Calu3 (cell line): ENCODE measurements at regions of chr13 and their contacts with region 1.

Region 1: DNA sequence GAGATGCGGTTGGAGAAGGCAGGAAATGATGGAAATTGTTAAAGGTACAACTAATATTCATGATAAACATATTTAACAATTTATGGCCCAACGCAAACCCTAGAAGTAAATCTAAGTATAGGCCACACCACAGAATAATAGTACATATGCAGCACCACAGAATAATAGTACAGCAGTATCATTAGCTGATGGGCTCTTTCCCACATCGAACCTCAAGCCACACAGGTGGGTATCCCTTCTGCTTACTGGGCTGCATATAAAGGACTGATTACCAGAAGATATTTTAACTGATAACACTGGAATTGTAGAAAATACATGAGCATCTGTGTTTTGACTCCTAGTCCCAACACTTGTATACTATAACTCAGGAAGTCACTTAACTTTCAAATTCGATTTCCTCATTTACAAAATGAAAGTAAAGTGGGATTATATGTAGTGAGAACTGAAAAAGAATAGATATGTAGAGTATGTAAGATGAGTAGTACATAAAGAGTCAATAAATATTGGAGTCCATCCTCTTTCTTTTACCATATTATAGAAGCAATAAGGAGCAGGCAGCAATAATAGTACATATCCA is 91.5 kb downstream of the TSC22D1 start:
- DNase-seq: no peak
- H3K4me3 Mint-ChIP-seq: no peak overlapping the region
- H3K27ac Mint-ChIP-seq: no peak overlapping the region
- H3K4me1 Mint-ChIP-seq: no peaks in the 10 kb centered on the region
- H3K27me3 Mint-ChIP-seq: no peaks in the 10 kb centered on the region
- CTCF ChIP-seq: no peak

Region 2: GRCh38 chr13:44577236-44578066 is 92.8 kb after region 1 on chr13:
- CTCF ChIA-PET with region 1: no interaction called
- intact Hi-C with region 1: loop called (anchors 10 kb)
- DNase-seq: peak; percentile 93
- H3K4me3 Mint-ChIP-seq: peak overlapping the region; percentile 83
- H3K27ac Mint-ChIP-seq: peak overlapping the region; percentile 36
- H3K4me1 Mint-ChIP-seq: peaks cover 21% of the 10 kb centered on the region
- H3K27me3 Mint-ChIP-seq: no peaks in the 10 kb centered on the region
- CTCF ChIP-seq: no peak

Region 3: DNA sequence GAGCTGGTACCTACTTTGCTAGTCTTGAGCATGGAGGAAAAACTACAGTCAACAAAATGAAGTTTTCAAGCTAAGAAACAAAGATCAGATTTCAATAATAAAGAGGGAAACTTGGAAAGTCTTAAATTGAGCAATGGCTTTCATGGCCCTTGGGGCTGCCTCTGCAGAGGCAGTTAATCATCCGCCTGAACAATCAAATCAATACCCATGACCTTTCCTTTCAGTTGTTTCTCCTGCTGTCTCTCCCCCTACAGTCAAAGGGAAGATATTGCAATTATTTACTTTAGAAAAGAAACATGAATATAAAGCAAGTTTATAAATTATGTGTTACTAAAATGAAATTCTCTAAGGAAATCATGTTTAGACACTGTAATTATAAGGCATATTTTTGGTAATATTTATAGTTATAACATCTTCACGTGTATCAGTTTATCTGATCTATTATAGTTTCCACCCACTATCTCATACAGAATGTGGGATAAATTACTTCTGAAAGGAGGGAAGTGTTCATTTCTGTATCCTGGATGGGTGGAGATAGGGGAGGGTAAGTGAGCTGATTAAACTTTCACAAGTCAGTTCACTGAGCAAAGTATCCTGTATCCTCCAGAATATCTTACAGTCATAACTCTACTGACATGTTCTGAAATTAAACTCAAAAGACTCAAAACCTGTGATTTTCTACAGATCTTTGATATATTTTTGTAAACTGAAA is 163.9 kb after region 1 on chr13:
- CTCF ChIA-PET with region 1: no interaction called
- intact Hi-C with region 1: no loop called
- DNase-seq: no peak
- H3K4me3 Mint-ChIP-seq: no peak overlapping the region
- H3K27ac Mint-ChIP-seq: no peak overlapping the region
- H3K4me1 Mint-ChIP-seq: no peaks in the 10 kb centered on the region
- H3K27me3 Mint-ChIP-seq: no peaks in the 10 kb centered on the region
- CTCF ChIP-seq: peak; percentile 23

Region 4: DNA sequence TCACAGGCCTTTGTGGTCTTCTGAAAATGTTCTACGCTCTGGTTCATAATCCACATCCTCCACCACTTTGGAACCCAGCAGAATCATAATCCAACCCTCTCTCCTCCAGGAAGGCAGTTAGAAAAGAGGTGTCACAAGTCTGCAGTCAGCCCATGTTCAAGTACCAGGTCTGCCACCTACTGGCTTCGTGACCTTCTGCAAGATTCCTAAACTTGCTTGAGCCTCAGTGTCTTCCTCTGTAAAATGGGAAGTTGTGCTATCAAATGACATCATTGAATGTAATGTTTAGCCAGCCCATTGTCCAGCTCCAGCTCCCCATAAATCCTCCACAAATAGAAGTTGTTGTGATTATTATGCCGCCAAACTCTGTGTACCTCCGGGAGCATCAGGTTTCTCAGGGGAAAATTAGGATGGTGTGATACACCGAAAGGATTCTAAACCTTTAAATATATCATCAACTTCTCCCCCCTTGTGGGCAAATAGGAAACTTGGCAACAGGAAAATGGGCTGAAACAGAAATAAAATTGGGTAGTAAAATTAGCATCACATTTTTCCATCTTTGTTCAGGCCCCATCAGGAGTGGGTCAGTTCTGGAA is 394.9 kb after region 1 on chr13:
- CTCF ChIA-PET with region 1: interaction called, 5 read pairs
- intact Hi-C with region 1: loop called (anchors 1 kb)
- DNase-seq: peak; percentile 15
- H3K4me3 Mint-ChIP-seq: no peak overlapping the region
- H3K27ac Mint-ChIP-seq: no peak overlapping the region
- H3K4me1 Mint-ChIP-seq: no peaks in the 10 kb centered on the region
- H3K27me3 Mint-ChIP-seq: no peaks in the 10 kb centered on the region
- CTCF ChIP-seq: no peak

Region 5: GRCh38 chr13:44969551-44970484 is 485.2 kb after region 1 on chr13:
- CTCF ChIA-PET with region 1: no interaction called
- intact Hi-C with region 1: loop called (anchors 2 kb)
- DNase-seq: no peak
- H3K4me3 Mint-ChIP-seq: no peak overlapping the region
- H3K27ac Mint-ChIP-seq: no peak overlapping the region
- H3K4me1 Mint-ChIP-seq: no peaks in the 10 kb centered on the region
- H3K27me3 Mint-ChIP-seq: no peaks in the 10 kb centered on the region
- CTCF ChIP-seq: peak; percentile 36